CD8-positive, alpha-beta memory T cell (primary cell): ENCODE measurements at regions of chr9 and their contacts with region 1.

Region 1: DNA sequence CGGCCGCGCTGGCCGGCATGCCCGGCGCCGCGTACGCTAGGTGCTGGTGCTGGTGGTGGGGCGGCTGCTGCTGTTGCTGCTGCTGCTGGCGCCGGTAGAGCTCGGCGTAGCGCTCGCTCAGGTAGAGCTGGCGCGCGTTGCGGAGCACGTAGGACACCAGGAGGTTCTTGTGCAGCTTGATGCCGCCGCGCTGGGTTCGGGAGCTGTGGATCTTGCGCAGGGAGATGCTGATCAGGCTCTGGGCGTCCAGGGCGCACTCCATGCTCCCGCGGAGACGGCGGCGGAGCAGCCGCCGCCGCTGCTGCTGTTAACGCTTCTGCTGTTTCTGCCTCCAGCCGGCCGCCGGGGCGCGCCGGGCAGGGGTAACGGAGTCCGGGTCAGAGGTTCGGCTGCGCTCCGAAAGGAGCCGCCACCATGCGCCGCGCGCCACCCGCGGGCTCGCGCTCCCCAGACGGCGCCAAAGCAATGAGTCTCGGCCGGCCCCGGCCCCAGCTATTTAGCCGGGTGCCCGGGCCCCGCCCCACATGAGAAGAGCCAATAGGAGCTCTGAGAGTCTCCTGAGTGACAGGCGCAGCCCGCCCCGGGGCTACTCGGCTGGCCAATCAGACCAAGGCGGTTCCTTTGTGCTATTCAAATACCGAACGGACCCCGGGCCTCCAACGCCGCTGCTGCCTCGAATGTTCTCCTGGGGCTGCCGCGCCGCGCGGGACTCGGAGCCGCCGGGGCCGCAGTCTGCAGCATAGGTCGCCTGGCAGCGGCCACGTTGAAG is at the start of gene IER5L:
- DNase-seq: peak; percentile 88 to 96 (median 91)
- H3K4me3 ChIP-seq: peak within 1 kb of the TSS; percentile 71
- H3K4me3 Mint-ChIP-seq: peak within 1 kb of the TSS; percentile 91 to 98 (median 93)
- H3K27ac ChIP-seq: peak within 1 kb of the TSS; percentile 72
- H3K27ac Mint-ChIP-seq: peak within 1 kb of the TSS; percentile 47 to 91 (median 80)
- H3K4me1 ChIP-seq: no peaks in the 10 kb centered on the region
- H3K4me1 Mint-ChIP-seq: peaks cover 9 to 20% (median 9%) of the 10 kb centered on the region in 3 donors
- H3K27me3 ChIP-seq: peaks cover under 1% of the 10 kb centered on the region
- H3K27me3 Mint-ChIP-seq: peaks cover 0 to 4% of the 10 kb centered on the region in 2 donors
- total RNA-seq, gene IER5L: 2.8 to 3.0 TPM

Region 2: GRCh38 chr9:128361986-128362646 is 815.9 kb before region 1 on chr9:
- CTCF ChIA-PET with region 1: no interaction called
- POLR2A ChIA-PET with region 1: no interaction called
- DNase-seq: peak; percentile 47 to 74 (median 52)
- H3K4me3 ChIP-seq: peak overlapping the region; percentile 62
- H3K4me3 Mint-ChIP-seq: peak overlapping the region; percentile 40 to 84 (median 77)
- H3K27ac ChIP-seq: no peak overlapping the region
- H3K27ac Mint-ChIP-seq: peak overlapping the region in 6 of 8 donors; percentile 1 to 87 (median 47)
- H3K4me1 ChIP-seq: peaks cover 9% of the 10 kb centered on the region
- H3K4me1 Mint-ChIP-seq: peaks cover 5 to 12% (median 6%) of the 10 kb centered on the region in 3 donors
- H3K27me3 ChIP-seq: no peaks in the 10 kb centered on the region
- H3K27me3 Mint-ChIP-seq: peaks cover 6 to 8% of the 10 kb centered on the region in 2 donors

Region 3: DNA sequence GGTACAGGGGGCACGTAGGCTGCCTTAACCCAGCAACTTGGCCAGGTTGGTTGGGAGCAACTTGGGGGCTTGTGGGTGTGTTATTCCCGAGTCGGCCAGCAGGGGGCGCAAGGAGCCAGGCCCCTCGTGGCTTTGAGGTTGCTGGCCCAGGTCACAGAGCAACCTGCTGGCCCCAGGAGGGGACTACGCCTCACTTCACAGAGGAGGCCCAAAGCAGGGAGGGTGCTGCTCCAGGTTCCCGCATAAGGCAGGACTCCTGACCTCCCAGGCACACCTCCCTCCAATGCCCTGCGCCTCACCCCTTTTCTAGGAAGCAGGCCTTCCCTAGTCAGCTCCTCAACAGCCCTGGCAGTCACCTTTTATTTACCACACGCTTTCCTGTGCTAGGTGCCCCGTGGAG is 314.3 kb before region 1 on chr9:
- CTCF ChIA-PET with region 1: no interaction called
- POLR2A ChIA-PET with region 1: no interaction called
- DNase-seq: peak; percentile 72 to 87 (median 78)
- H3K4me3 ChIP-seq: no peak overlapping the region
- H3K4me3 Mint-ChIP-seq: no peak overlapping the region
- H3K27ac ChIP-seq: no peak overlapping the region
- H3K27ac Mint-ChIP-seq: peak overlapping the region in 5 of 8 donors; percentile 41 to 78 (median 61)
- H3K4me1 ChIP-seq: peaks cover 5% of the 10 kb centered on the region
- H3K4me1 Mint-ChIP-seq: peaks cover 3 to 6% (median 4%) of the 10 kb centered on the region in 3 donors
- H3K27me3 ChIP-seq: no peaks in the 10 kb centered on the region
- H3K27me3 Mint-ChIP-seq: no peaks in the 10 kb centered on the region

Region 4: DNA sequence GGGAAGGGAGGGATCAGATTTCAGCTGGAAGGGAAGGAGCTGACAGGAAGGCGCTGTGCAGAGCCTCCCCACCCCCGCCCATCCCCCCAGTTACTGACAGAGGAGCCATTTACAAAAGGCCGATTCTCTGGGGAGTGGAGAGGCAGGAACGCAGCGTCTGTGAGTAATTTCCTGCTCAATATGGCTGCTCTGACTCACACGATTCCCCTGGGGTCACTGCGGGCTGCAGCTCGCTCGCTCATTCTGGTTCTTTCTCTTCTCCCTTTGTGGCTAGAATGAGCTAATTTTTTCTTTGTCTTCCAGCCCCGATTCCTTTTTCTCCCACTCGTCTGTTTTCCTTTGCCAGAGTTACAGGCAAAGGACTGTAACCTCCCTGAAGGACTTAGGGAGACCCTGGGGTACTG is 38.0 kb before region 1 on chr9:
- CTCF ChIA-PET with region 1: interaction called, 122 read pairs
- POLR2A ChIA-PET with region 1: interaction called, 5 read pairs
- DNase-seq: peak; percentile 65 to 86 (median 70)
- H3K4me3 ChIP-seq: peak overlapping the region; percentile 61
- H3K4me3 Mint-ChIP-seq: peak overlapping the region; percentile 80 to 97 (median 87)
- H3K27ac ChIP-seq: peak overlapping the region; percentile 95
- H3K27ac Mint-ChIP-seq: peak overlapping the region; percentile 82 to 100 (median 94)
- H3K4me1 ChIP-seq: peaks cover 38% of the 10 kb centered on the region
- H3K4me1 Mint-ChIP-seq: peaks cover 28 to 47% (median 29%) of the 10 kb centered on the region in 3 donors
- H3K27me3 ChIP-seq: no peaks in the 10 kb centered on the region
- H3K27me3 Mint-ChIP-seq: no peaks in the 10 kb centered on the region

Region 5: GRCh38 chr9:129166623-129167557 is 11.1 kb before region 1 on chr9:
- CTCF ChIA-PET with region 1: interaction called, 11 read pairs
- POLR2A ChIA-PET with region 1: no interaction called
- DNase-seq: peak in 1 of 5 donors; percentile 6
- H3K4me3 ChIP-seq: peak overlapping the region; percentile 15
- H3K4me3 Mint-ChIP-seq: peak overlapping the region in 5 of 7 donors; percentile 32 to 48 (median 35)
- H3K27ac ChIP-seq: peak overlapping the region; percentile 35
- H3K27ac Mint-ChIP-seq: peak overlapping the region in 3 of 8 donors; percentile 36 to 73 (median 69)
- H3K4me1 ChIP-seq: peaks cover 11% of the 10 kb centered on the region
- H3K4me1 Mint-ChIP-seq: peaks cover 6 to 14% (median 9%) of the 10 kb centered on the region in 3 donors
- H3K27me3 ChIP-seq: no peaks in the 10 kb centered on the region
- H3K27me3 Mint-ChIP-seq: peaks cover under 1 to 6% of the 10 kb centered on the region in 2 donors

Region 6: GRCh38 chr9:129237195-129237611 is 59.2 kb after region 1 on chr9:
- CTCF ChIA-PET with region 1: interaction called, 8 read pairs
- POLR2A ChIA-PET with region 1: interaction called, 36 read pairs
- DNase-seq: peak in 3 of 5 donors; percentile 3 to 66 (median 52)
- H3K4me3 ChIP-seq: peak overlapping the region; percentile 54
- H3K4me3 Mint-ChIP-seq: peak overlapping the region; percentile 84 to 94 (median 90)
- H3K27ac ChIP-seq: peak overlapping the region; percentile 41
- H3K27ac Mint-ChIP-seq: peak overlapping the region; percentile 77 to 97 (median 91)
- H3K4me1 ChIP-seq: peaks cover 45% of the 10 kb centered on the region
- H3K4me1 Mint-ChIP-seq: peaks cover 57 to 81% (median 67%) of the 10 kb centered on the region in 3 donors
- H3K27me3 ChIP-seq: no peaks in the 10 kb centered on the region
- H3K27me3 Mint-ChIP-seq: peaks cover 0 to 1% of the 10 kb centered on the region in 2 donors

Region 7: DNA sequence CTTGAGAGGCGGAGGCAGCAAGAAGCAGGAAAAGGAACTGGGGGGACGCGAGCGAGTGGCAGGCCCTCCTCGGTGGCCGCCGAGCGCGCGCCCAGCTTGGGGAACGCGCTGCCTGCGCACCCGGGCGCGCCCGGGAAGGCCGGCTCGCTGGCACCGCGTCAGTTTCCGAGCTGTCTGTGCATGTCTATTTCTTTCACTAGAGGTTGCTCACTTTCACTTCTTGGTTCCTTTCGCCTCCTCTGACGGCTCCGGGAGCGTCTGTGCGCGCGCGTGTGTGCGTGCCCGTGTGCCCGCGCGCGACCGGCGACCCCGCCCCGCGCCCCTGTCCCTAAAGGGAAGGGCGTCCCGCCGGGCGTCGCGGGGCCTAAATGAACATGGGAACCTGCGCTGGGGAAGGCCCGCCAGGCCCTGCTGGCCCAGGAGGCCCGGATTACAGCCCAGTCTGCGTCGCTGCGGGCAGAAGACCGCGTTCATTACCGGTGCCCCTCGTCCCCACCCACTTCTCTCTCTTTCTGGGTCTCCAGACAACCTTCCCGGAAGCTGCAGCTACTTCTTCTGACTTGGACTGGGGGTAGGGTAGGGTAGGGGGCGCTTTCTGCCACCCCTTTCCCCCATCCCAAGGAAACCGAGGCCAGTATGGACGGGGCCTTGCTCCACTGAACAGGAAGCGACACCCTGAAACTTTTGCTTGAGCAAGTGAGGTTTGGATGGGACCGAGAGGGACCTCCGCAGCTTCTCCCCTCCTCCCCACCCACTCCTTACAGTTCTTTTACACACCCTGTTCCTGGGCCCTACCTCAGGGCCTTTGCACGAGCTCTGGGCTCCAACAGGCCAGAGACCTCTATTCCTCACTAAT is 205.8 kb after region 1 on chr9:
- CTCF ChIA-PET with region 1: interaction called, 10 read pairs
- POLR2A ChIA-PET with region 1: interaction called, 10 read pairs
- DNase-seq: peak; percentile 47 to 85 (median 77)
- H3K4me3 ChIP-seq: peak overlapping the region; percentile 74
- H3K4me3 Mint-ChIP-seq: peak overlapping the region; percentile 78 to 91 (median 79)
- H3K27ac ChIP-seq: peak overlapping the region; percentile 38
- H3K27ac Mint-ChIP-seq: peak overlapping the region; percentile 86 to 97 (median 93)
- H3K4me1 ChIP-seq: peaks cover 14% of the 10 kb centered on the region
- H3K4me1 Mint-ChIP-seq: peaks cover 7 to 20% (median 9%) of the 10 kb centered on the region in 3 donors
- H3K27me3 ChIP-seq: no peaks in the 10 kb centered on the region
- H3K27me3 Mint-ChIP-seq: no peaks in the 10 kb centered on the region

Region 8: DNA sequence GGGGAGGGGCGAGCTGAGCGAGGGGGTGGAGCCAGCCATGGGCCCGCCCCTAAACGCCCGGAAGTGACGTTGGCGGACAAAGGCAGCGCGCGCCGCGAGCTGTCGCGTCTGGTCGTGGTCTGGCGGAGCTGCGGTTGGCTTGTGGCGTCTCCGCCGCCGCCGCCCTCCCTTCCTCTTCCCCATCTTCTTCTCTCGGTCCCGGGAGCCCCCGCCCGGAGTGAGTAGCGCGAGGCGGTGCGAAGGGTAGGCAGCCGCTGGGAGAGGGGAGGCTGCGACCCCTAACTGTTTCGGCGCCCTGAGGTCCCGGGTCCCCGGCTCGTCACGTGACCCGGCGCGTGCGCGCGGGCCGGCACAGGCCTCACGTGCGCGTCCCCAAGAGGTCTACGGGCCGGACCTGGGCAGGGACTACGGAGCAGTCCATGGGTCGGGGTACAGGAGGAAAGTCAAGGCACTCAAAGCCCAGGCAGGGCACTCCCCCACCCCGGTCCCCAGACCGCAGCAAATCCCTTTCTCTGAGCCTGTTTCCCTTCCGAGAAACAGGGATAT is 448.2 kb after region 1 on chr9 and contains the start of gene NTMT1:
- CTCF ChIA-PET with region 1: interaction called, 30 read pairs
- POLR2A ChIA-PET with region 1: interaction called, 8 read pairs
- DNase-seq: peak; percentile 82 to 93 (median 89)
- H3K4me3 ChIP-seq: peak within 1 kb of the TSS; percentile 100
- H3K4me3 Mint-ChIP-seq: peak within 1 kb of the TSS; percentile 82 to 93 (median 89)
- H3K27ac ChIP-seq: peak within 1 kb of the TSS; percentile 97
- H3K27ac Mint-ChIP-seq: peak within 1 kb of the TSS; percentile 86 to 99 (median 97)
- H3K4me1 ChIP-seq: peaks cover 54% of the 10 kb centered on the region
- H3K4me1 Mint-ChIP-seq: peaks cover 48 to 63% (median 62%) of the 10 kb centered on the region in 3 donors
- H3K27me3 ChIP-seq: peaks cover 8% of the 10 kb centered on the region
- H3K27me3 Mint-ChIP-seq: peaks cover 6 to 11% of the 10 kb centered on the region in 2 donors
- total RNA-seq, gene NTMT1: 65.5 to 68.9 TPM